Testis (tissue), 5 donors: ENCODE measurements at regions of chr2 and their contacts with region 1.

Region 1: DNA sequence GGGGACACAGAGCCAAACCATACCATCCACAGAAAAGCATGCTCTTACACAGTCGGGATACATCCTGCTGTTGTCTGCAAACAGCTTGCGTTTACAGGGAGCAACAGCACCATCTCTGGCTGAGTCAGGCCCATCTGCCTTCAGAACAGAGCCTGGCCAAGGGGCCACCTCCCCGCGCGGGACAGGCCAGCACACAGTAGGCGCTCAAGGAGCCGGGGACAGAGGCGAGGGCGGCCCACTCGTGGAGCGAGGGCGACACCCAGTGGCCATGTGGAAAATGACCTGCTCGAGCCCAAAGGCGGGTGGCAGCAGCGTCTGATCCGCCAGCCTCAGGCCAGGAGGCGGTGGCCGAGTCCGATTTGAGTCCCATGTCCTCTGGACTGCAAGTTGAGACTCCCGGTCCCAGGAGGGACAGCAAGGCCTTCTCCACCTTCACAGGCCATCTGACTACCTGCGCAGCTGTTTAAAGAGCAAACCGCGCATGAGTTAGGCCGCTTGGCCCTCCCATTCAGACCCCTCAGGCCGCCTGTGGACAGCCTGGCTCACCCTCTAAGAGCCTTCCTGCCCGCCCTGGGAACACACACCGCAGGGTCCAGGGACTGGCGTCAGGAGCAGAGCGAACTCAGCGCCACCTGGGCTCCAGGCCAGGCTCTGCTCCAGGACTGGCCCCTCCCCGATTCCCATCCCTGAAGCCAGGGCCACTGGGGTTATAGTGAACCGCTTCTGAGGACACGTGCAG is 38.3 kb downstream of the TTC32 start:
- DNase-seq: peak; percentile 83
- H3K4me3 ChIP-seq: peak overlapping the region in 1 of 2 donors; percentile 7
- H3K27ac ChIP-seq: no peak overlapping the region
- H3K4me1 ChIP-seq: peaks cover 6% of the 10 kb centered on the region
- H3K27me3 ChIP-seq: no peaks in the 10 kb centered on the region
- CTCF ChIP-seq: peak; percentile 75 to 93 (median 92)
- POLR2A ChIP-seq: no peak

Region 2: DNA sequence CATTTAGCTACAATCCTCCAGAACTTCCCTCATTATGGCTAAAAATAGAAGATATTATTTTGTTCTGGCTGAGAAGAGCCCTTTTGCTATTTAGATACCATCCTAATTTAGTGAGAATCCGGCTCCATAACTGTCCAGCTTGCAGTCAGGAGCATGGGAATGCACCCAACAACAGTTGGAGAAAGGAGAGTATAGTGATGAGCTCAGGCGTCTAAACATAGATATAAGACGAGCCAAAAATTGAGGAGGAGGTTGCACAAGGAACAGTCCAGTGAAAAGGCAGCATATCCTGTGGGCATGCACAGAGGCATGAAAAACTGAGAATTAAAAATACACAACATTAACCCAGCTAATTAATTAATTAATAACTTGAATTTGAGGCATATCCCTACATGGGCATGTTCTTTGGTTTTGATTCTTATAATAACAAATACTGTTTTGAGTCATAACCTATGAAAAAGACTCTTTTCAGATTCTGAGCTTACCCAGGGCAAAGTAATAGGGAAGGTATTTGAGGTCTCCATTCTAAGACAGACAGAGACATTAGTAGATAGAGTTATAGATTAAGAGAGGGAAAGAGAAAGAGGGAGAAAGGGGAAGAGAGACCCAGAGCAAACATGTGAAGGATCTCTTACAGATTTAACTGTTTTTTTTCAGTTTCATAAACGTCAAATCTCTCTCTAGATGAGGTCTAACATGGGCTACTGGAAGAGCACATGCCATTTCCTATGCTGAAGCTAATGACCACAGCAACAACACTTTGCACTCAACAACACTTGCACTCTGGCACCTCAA is 816.3 kb before region 1 on chr2:
- intact Hi-C with region 1: loop called (anchors 10 kb)
- DNase-seq: peak; percentile 51
- H3K4me3 ChIP-seq: no peak overlapping the region
- H3K27ac ChIP-seq: no peak overlapping the region
- H3K4me1 ChIP-seq: peaks cover 6% of the 10 kb centered on the region
- H3K27me3 ChIP-seq: no peaks in the 10 kb centered on the region
- CTCF ChIP-seq: no peak
- POLR2A ChIP-seq: no peak

Region 3: DNA sequence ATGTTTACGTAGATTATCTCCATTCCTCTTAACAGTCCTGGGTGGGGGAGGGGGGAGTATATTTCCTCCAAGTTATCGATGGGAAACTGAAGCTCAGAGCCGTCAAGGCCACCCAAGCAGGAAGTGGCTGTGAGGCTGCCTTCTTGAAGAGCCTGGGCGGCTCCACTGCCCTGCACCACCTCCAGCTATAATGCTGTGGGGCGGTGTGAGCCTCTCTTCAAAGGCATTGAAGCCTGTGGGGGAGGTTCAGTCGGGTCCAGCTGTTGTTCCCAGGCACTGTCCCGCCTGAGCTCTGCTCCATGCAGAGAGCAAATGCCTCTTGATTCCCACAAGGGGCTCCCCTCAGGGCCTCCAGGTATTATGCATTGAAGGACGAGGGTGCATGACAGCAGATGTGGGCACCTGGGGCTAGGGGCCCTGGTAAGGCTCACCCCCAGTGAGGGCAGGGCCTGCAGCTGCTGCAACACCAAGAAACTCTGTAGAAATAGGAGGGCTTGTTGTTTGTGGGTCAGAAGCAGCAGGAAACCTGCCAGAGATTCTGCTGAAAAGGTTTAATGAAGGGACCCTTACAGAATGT is 217.5 kb after region 1 on chr2:
- intact Hi-C with region 1: no loop called
- DNase-seq: no peak
- H3K4me3 ChIP-seq: no peak overlapping the region
- H3K27ac ChIP-seq: no peak overlapping the region
- H3K4me1 ChIP-seq: no peaks in the 10 kb centered on the region
- H3K27me3 ChIP-seq: no peaks in the 10 kb centered on the region
- CTCF ChIP-seq: no peak
- POLR2A ChIP-seq: no peak

Region 4: GRCh38 chr2:20097879-20098714 is 234.6 kb after region 1 on chr2:
- intact Hi-C with region 1: no loop called
- DNase-seq: peak; percentile 90
- H3K4me3 ChIP-seq: no peak overlapping the region
- H3K27ac ChIP-seq: no peak overlapping the region
- H3K4me1 ChIP-seq: peaks cover 7% of the 10 kb centered on the region
- H3K27me3 ChIP-seq: no peaks in the 10 kb centered on the region
- CTCF ChIP-seq: peak; percentile 65 to 85 (median 82)
- POLR2A ChIP-seq: no peak